Heart left ventricle (tissue), 16 donors: ENCODE measurements at regions of chrX and their contacts with region 1.

Region 1: DNA sequence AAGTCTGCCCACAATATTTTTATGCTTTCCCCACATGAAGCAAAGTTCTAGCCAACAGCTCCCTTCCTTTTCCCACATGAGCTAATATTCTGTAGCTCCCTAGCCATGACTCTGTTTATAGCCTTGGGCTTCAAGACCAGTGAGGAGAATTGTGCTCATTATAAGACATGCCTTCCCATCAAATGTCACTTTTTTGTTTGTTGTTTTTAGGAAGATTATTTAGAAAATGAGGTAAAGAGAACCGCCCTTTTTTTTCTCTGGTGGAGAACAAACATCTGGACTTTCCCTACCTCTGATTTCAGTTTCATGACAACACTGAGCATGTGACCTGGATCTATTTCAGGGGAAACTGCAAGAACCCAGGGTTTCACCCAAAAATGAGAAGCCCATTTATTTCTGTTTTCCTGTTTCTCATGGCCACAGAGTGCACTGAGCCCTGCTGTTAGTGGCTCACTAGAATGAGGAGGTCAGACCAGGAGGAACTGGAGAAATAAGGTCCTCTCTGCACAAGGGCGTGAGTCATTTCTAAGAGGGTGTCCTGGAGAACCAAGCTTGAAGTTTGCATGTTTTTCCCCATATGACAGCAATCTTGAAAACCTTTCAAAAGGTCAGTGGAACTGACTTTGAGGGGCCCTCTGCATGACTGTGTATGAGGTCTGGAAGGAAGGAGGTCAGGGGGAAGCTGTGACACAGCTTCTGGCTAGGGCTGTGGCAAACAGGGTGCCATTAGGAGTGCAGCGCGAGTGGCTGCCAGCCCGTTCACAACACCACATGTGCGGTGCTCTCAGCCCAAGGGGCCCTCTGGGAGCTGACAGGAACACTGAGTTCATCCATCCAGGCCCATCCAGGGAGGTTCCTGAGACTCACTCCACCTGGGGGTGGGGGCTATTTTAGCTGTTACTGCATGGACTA is 55.2 kb downstream of the CHST7 start:
- DNase-seq: peak in 4 of 5 donors; percentile 19 to 71 (median 36)
- ATAC-seq: peak; percentile 77 to 80 (median 80)
- H3K4me3 ChIP-seq: no peak overlapping the region
- H3K27ac ChIP-seq: peak overlapping the region; percentile 31 to 81 (median 60)
- H3K4me1 ChIP-seq: peaks cover 0 to 42% (median 20%) of the 10 kb centered on the region in 12 donors
- H3K27me3 ChIP-seq: peaks cover 0 to 9% (median 0%) of the 10 kb centered on the region in 9 donors
- CTCF ChIP-seq: no peak
- POLR2A ChIP-seq: no peak

Region 2: GRCh38 chrX:46573331-46573891 is 55.3 kb before region 1 on chrX and contains the start of gene CHST7:
- intact Hi-C with region 1: loop called in 1 of 10 experiments (anchors 2 kb)
- DNase-seq: peak; percentile 68 to 87 (median 80)
- ATAC-seq: peak; percentile 74 to 85 (median 84)
- H3K4me3 ChIP-seq: peak within 1 kb of the TSS; percentile 33 to 89 (median 67)
- H3K27ac ChIP-seq: peak within 1 kb of the TSS; percentile 70 to 85 (median 81)
- H3K4me1 ChIP-seq: peaks cover 0 to 21% (median 7%) of the 10 kb centered on the region in 12 donors
- H3K27me3 ChIP-seq: no peaks in the 10 kb centered on the region
- CTCF ChIP-seq: peak in 9 of 12 donors; percentile 6 to 53 (median 24)
- POLR2A ChIP-seq: peak in 1 of 2 donors; percentile 79
- total RNA-seq, gene CHST7: 5.0 to 41.8 (median 15.0) TPM

Region 3: DNA sequence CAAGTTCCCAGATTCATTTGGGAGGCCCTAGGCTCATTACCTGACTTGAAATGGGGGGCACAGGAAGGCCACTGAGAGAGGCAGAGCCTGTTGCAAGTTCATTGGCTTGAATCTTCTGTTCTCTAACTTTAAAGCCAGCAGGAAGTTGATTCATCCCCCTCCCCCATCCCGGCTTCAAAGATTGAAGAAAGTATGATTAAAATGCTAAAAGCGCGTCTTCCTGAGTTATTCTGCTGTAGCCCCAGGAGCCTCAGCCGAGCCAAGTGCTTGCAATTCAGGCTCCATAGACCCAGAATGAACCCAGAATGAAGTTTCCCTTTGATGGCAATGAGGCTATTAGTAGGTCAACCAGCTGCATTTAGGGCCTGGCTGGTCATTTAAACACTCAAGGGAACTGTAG is 40.5 kb before region 1 on chrX:
- intact Hi-C with region 1: loop called in 2 of 10 experiments (anchors 5 kb)
- DNase-seq: peak in 4 of 5 donors; percentile 55 to 70 (median 60)
- ATAC-seq: peak; percentile 35 to 77 (median 72)
- H3K4me3 ChIP-seq: peak overlapping the region in 5 of 12 donors; percentile 2 to 33 (median 8)
- H3K27ac ChIP-seq: peak overlapping the region in 11 of 12 donors; percentile 38 to 79 (median 61)
- H3K4me1 ChIP-seq: peaks cover 3 to 68% (median 37%) of the 10 kb centered on the region in 12 donors
- H3K27me3 ChIP-seq: no peaks in the 10 kb centered on the region
- CTCF ChIP-seq: no peak
- POLR2A ChIP-seq: no peak

Region 4: DNA sequence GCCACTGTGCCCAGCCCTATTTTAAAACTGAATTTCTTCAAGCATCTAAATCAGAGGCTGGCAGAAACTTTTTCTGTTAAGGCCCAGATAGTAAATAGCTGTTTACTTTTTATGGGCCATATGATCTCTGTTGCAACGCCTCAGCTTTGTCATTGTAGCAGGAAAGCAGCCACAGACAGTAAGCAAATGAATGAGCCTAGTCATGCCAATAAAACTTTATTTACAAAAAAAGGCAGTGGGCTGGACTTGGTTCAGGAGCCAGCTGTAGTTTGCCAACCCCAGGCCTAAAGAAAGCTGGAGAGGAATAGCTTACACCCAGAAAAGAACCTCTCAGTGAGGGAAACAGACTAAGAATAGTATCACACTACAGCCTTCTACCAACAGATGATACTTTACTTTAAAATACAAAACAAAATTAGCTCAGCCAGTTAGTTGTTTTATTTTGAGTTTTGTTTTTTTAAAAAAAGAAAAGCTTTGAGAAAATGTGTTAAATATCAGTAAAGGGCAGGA is 29.6 kb before region 1 on chrX:
- intact Hi-C with region 1: loop called in 1 of 10 experiments (anchors 5 kb)
- DNase-seq: no peak
- ATAC-seq: peak in 2 of 4 donors; percentile 25 to 62
- H3K4me3 ChIP-seq: no peak overlapping the region
- H3K27ac ChIP-seq: peak overlapping the region in 10 of 12 donors; percentile 33 to 75 (median 48)
- H3K4me1 ChIP-seq: peaks cover 0 to 57% (median 14%) of the 10 kb centered on the region in 12 donors
- H3K27me3 ChIP-seq: no peaks in the 10 kb centered on the region
- CTCF ChIP-seq: no peak
- POLR2A ChIP-seq: no peak